CD8-positive, alpha-beta T cell (primary cell): ENCODE measurements at regions of chr19 and their contacts with region 1.

Region 1: DNA sequence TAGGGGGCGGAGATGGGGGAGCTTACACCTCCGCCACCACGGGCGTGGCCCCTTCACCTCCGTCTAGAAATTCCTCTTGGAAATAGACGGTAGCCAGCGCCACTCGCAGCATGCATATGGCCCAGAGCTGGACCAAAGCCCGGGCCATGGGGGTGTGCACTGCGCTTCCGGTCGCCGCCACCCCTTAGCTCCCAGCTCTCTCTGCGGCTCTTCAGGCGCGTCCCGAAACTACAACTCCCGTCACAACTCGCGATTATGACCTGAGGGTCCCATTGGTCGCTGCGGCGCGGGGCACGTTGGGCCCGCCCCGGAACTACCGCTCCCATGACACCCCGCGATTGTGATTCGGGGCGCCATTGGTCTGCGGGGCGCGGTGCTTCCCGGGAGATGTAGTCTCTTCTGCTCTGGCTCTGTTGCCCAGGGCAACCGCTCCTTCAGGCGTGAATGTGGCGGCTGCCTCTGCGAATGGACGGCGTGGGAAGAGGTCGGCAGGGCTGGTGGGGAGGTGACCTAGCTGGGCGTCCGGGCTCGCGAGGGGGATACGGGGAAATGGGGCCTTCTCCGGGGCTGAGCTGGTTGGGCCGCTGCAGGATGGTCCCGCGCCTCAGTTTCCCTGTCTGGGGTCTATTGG is at the starts of genes C19orf44 and CALR3:
- DNase-seq: peak; percentile 92 to 98 (median 96)
- ATAC-seq: peak; percentile 99
- H3K4me3 ChIP-seq: peak within 1 kb of the TSS; percentile 66 to 89
- H3K4me3 Mint-ChIP-seq: peak within 1 kb of the TSS; percentile 94
- H3K27ac ChIP-seq: peak within 1 kb of the TSS; percentile 67 to 73
- H3K27ac Mint-ChIP-seq: peak within 1 kb of the TSS; percentile 86
- H3K4me1 ChIP-seq: peaks cover 11% of the 10 kb centered on the region
- H3K4me1 Mint-ChIP-seq: peaks cover 14% of the 10 kb centered on the region
- H3K27me3 ChIP-seq: no peaks in the 10 kb centered on the region
- H3K27me3 Mint-ChIP-seq: no peaks in the 10 kb centered on the region
- CTCF ChIP-seq: no peak
- total RNA-seq, gene C19orf44: 0.52 to 0.61 TPM
- total RNA-seq, gene CALR3: not detected

Region 2: GRCh38 chr19:16470911-16471811 is 24.9 kb before region 1 on chr19:
- CTCF ChIA-PET with region 1: no interaction called
- POLR2A ChIA-PET with region 1: no interaction called
- intact Hi-C with region 1: loop called (anchors 1 kb)
- DNase-seq: peak in 4 of 9 experiments; percentile 20 to 54 (median 39)
- ATAC-seq: peak; percentile 9
- H3K4me3 ChIP-seq: peak overlapping the region; percentile 50 to 69
- H3K4me3 Mint-ChIP-seq: peak overlapping the region; percentile 88
- H3K27ac ChIP-seq: peak overlapping the region in 1 of 2 experiments; percentile 33
- H3K27ac Mint-ChIP-seq: peak overlapping the region; percentile 57
- H3K4me1 ChIP-seq: peaks cover 21% of the 10 kb centered on the region
- H3K4me1 Mint-ChIP-seq: peaks cover 38% of the 10 kb centered on the region
- H3K27me3 ChIP-seq: no peaks in the 10 kb centered on the region
- H3K27me3 Mint-ChIP-seq: peaks cover 2% of the 10 kb centered on the region
- CTCF ChIP-seq: no peak

Region 3: DNA sequence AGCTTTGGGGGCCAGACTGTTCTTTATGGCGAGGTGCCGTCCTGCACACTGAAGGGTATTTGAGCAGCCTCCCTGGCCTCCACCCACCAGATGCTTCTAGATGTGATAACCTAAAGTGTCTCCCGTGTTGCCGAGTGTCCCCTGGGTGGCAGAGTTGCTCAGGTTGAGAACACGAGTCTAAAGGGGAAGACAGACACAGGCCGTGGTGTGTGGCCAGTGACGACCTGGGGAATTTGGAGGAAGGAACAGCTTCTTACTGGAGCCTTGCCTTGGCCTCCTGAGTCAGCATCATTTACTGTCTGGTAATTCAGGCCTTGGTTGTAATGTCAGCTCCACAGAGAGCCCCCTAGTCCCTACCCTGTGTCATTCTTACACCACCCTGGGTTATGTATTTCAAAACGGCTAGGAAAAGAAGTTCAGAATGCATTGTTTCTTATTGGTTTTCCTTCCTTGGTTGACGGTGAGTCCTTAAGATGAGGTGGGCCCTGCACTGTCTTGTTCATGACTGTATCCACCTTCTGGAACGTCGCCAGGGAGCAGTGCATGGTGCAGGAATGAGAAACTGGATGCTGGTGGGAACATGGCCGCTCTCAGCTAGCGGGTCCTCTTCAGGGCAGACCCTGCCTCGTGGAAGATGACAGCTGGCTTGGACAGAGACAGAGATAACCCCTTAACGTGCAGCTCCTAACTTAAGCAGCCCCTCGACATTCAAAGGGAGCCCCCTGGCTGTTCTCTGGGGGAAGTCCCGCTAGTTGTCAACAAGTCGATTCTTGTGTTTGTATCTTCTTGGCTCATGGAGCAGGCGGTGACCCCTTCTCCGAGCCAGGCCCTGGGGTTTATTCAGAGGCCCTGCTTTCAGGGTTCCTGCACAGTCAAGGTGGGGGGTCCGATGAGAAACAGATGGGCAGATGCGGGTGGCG is 340.3 kb after region 1 on chr19:
- CTCF ChIA-PET with region 1: no interaction called
- POLR2A ChIA-PET with region 1: no interaction called
- intact Hi-C with region 1: loop called in 1 of 2 experiments (anchors 10 kb)
- DNase-seq: peak in 2 of 9 experiments; percentile 18 to 36
- ATAC-seq: no peak
- H3K4me3 ChIP-seq: no peak overlapping the region
- H3K4me3 Mint-ChIP-seq: no peak overlapping the region
- H3K27ac ChIP-seq: no peak overlapping the region
- H3K27ac Mint-ChIP-seq: no peak overlapping the region
- H3K4me1 ChIP-seq: no peaks in the 10 kb centered on the region
- H3K4me1 Mint-ChIP-seq: peaks cover 10% of the 10 kb centered on the region
- H3K27me3 ChIP-seq: no peaks in the 10 kb centered on the region
- H3K27me3 Mint-ChIP-seq: no peaks in the 10 kb centered on the region
- CTCF ChIP-seq: no peak